A673 (cell line): ENCODE measurements at regions of chr15 and their contacts with region 1.

Region 1: DNA sequence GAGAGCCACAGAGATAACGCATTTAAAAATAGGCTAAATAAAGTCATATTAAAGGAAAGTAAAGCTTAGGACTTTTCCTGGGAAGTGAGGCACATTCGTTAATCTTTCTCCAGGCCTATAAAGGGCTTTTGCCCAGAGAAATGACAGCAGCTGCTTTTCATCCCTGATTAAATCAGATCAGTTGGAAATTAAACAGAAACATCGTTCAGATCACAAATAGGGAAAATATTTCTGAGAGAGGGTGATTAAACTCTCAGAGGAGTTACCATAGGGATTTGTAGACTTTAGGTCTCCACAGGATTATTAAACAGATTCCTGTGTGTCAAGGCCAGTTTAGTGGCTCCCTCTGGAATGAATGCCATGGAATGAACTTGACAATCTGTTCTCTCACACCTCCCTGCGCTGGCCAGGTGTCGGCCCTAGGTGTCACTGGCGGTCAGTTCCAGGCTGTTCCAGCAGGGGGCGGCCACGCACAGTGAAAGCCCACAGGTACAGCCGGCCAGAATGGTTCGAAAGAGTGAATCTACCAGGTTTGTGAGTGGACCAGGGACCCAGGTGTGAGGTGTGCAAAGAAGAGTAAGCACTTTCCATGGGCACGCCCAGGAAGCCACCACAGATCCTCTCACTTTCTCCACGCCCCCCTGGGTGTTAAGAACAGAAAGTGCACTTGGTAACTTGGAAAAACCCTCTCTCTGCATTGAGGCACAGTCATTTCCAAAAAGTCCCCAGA is 253.0 kb upstream of the RASGRP1 start:
- DNase-seq: peak; percentile 49
- H3K4me3 ChIP-seq: no peak overlapping the region
- H3K27ac ChIP-seq: no peak overlapping the region
- H3K4me1 ChIP-seq: no peaks in the 10 kb centered on the region
- H3K27me3 ChIP-seq: peaks cover 10% of the 10 kb centered on the region
- CTCF ChIP-seq: peak; percentile 99

Region 2: DNA sequence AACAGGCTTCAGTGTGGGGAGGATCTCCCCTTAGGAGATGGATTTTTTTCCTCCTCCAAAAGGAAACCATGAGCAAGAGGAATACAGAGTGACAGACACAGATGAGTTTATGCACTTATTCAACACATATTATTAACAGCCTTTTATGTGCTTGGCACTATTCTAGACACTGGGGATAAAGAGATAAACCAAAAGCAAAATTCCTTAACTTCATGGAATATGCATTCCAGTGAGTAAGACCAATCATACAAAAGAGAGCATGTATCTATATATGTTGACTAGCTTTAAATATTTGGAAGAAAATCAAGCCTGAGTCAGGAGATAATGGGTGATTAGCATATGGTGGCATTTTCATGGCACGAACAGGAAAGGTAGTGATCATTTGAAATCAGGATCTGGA is 31.5 kb after region 1 on chr15:
- CTCF ChIA-PET with region 1: interaction called, 10 read pairs
- POLR2A ChIA-PET with region 1: no interaction called
- intact Hi-C with region 1: no loop called
- DNase-seq: no peak
- H3K4me3 ChIP-seq: no peak overlapping the region
- H3K27ac ChIP-seq: no peak overlapping the region
- H3K4me1 ChIP-seq: no peaks in the 10 kb centered on the region
- H3K27me3 ChIP-seq: peaks cover 2% of the 10 kb centered on the region
- CTCF ChIP-seq: no peak

Region 3: DNA sequence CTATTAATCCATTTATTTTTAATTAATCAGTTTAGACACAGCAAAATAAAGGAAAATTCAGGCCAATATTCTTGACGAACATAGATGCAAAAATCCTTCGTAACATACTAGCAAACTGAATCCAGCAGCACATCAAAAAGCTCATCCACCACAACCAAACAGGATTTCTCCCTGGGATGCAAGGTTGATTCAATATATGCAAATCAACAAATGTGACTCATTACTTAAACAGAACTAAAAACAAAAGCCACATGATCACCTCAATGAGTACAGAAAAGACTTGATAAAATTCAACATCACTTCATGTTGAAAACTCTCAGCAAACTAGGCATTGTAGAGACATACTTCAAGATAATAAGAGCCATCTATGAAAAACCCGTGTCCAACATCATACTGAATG is 399.2 kb after region 1 on chr15:
- CTCF ChIA-PET with region 1: no interaction called
- POLR2A ChIA-PET with region 1: no interaction called
- intact Hi-C with region 1: no loop called
- DNase-seq: no peak
- H3K4me3 ChIP-seq: no peak overlapping the region
- H3K27ac ChIP-seq: no peak overlapping the region
- H3K4me1 ChIP-seq: no peaks in the 10 kb centered on the region
- H3K27me3 ChIP-seq: peaks cover 4% of the 10 kb centered on the region
- CTCF ChIP-seq: no peak